ENCODE measurements at regions of chr13 and their contacts with region 1.

Region 1: DNA sequence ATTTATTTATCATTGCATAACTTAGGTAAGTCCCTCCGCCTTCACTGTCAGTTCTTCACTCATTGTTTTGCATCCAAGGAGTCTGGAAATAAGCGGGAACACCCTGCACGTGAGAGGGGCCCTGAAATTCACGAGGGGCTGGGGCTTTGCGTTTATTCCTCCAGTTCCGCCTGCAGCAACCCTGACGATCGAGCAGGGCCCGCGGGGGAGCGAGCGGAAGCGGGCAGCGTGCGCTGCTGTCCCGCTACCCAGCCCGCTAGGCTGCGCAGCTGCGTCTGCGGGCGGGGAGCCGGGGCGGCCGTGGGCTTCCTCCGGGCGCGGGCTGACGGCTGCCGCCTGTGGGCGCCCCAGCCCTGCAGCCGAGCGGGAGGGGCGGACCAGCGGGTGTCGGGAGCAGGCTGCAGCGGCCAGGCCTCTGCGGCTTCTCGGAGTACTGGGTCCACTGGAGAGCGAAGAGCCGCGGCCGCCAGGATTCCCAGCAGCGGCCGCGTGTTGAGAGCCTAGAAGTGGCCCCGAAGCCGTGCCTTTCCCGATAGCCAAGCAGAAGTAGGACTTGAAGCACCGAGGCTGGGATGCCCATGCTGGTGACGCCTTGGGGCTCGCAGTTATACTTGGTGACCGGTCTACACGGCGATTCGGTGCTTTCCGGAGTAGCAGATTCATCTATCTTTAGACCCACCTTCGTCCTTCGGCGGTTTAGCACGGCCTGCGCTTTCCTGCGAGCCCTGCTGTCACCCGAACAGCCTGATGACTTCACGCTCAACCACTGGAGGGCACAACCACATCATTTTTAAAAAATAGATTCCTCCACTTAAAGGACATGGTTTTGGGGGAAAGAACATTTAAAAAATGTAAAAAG is 32.9 kb upstream of the SACS start:
- DNase-seq: peak; percentile 51 to 96 (median 76)

Region 2: DNA sequence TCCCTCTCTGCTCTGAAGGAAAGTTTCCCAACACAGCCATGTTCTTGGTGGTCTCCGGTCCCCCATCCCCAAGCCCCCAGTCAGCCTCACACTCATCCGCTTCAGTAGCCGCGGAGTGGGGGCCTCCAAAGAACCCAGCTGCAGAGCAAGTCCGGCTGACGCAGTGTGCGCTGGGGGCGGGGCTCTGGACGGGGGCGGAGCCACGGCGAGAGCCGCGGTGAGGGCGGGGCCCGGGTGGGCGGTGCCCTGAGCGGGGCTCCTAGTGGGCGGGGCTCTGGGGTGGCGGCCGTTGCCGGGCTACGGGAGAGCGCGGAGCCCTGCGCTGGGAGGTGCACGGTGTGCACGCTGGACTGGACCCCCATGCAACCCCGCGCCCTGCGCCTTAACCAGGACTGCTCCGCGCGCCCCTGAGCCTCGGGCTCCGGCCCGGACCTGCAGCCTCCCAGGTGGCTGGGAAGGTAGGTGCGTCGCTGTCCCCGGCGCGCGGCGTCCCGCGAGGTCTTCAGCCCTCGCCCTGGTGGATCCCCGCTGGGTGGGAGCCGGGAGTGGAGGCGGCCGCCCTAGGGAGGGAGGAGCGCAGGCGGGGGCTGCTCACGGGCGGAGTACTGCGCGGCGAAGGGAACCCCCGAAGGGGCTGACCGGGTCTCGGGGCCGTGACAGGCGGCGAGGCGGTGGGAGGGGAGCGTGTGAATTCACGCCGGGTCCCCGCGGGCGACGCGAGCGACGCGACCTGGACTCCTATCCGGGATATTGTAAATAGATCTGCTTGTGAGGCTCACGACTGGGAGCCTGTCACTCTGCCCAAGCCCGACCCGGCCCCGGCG is 112.9 kb after region 1 on chr13:
- intact Hi-C with region 1: loop called (anchors 10 kb)
- DNase-seq: peak; percentile 79 to 98 (median 88)

Measured in posterior cingulate gyrus (tissue), 11 donors.